ENCODE measurements at regions of chr1 and their contacts with region 1.

Region 1: GRCh38 chr1:24880697-24881433 is 49.2 kb downstream of the RUNX3 start:
- DNase-seq: no peak
- ATAC-seq: no peak
- H3K4me3 ChIP-seq: no peak overlapping the region
- H3K4me3 Mint-ChIP-seq: no peak overlapping the region
- H3K27ac ChIP-seq: no peak overlapping the region
- H3K27ac Mint-ChIP-seq: no peak overlapping the region
- H3K4me1 ChIP-seq: no peaks in the 10 kb centered on the region
- H3K4me1 Mint-ChIP-seq: no peaks in the 10 kb centered on the region
- H3K27me3 ChIP-seq: peaks cover 0 to 2% (median 0%) of the 10 kb centered on the region in 4 experiments
- H3K27me3 Mint-ChIP-seq: peaks cover 11% of the 10 kb centered on the region
- CTCF ChIP-seq: no peak

Region 2: GRCh38 chr1:24921938-24922662 is 41.2 kb after region 1 on chr1:
- CTCF ChIA-PET with region 1: no interaction called
- POLR2A ChIA-PET with region 1: no interaction called
- intact Hi-C with region 1: loop called (anchors 1 kb)
- DNase-seq: no peak
- ATAC-seq: no peak
- H3K4me3 ChIP-seq: no peak overlapping the region
- H3K4me3 Mint-ChIP-seq: peak overlapping the region; percentile 50
- H3K27ac ChIP-seq: peak overlapping the region in 1 of 2 donors; percentile 38
- H3K27ac Mint-ChIP-seq: peak overlapping the region; percentile 26
- H3K4me1 ChIP-seq: peaks cover 52 to 70% of the 10 kb centered on the region in 2 donors
- H3K4me1 Mint-ChIP-seq: peaks cover 79% of the 10 kb centered on the region
- H3K27me3 ChIP-seq: no peaks in the 10 kb centered on the region
- H3K27me3 Mint-ChIP-seq: no peaks in the 10 kb centered on the region
- CTCF ChIP-seq: no peak

Region 3: DNA sequence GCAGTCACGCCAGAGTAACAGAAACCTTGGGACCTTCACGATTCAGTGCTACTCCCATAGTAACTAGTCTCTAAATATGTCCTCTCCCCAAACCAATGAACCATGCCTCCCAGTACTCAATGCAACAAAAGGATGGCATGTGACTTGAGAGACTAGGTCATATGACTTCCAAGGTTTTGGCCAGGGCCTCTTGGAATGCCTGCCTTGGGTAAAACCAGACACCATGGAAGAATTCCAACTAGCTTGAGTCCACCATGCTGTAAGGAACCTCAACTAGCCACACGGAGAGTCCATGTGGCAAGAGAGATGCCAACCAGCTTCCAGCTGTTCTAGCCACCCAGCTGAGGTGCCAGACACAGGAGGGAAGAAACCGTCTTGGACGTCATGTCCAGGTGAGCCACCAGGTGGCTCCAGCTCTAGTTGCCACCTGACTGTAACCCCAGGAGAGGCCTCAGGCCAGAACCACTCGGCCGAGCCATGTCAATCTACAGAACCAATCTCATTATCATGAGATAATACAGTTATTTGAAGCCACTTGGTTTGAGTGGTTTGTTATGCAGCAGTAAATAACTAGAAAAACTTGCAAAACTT is 236.5 kb after region 1 on chr1:
- CTCF ChIA-PET with region 1: no interaction called
- POLR2A ChIA-PET with region 1: no interaction called
- intact Hi-C with region 1: no loop called
- DNase-seq: peak; percentile 43
- ATAC-seq: no peak
- H3K4me3 ChIP-seq: no peak overlapping the region
- H3K4me3 Mint-ChIP-seq: no peak overlapping the region
- H3K27ac ChIP-seq: no peak overlapping the region
- H3K27ac Mint-ChIP-seq: no peak overlapping the region
- H3K4me1 ChIP-seq: peaks cover 0 to 4% of the 10 kb centered on the region in 2 donors
- H3K4me1 Mint-ChIP-seq: peaks cover 6% of the 10 kb centered on the region
- H3K27me3 ChIP-seq: peaks cover 0 to 11% (median 2%) of the 10 kb centered on the region in 4 experiments
- H3K27me3 Mint-ChIP-seq: peaks cover 21% of the 10 kb centered on the region
- CTCF ChIP-seq: peak; percentile 39

Measured in B cell (primary cell).